ENCODE measurements at regions of chr4 and their contacts with region 1.

Region 1: GRCh38 chr4:110484740-110485139 is 8.8 kb downstream of the ENPEP start:
- DNase-seq: no peak
- ATAC-seq: no peak
- H3K4me3 ChIP-seq: no peak overlapping the region
- H3K27ac ChIP-seq: no peak overlapping the region; the same call in 1 of the 2 replicates
- H3K4me1 ChIP-seq: peaks cover 13% of the 10 kb centered on the region
- H3K27me3 ChIP-seq: no peaks in the 10 kb centered on the region
- CTCF ChIP-seq: no peak
- EP300 ChIP-seq: no peak
- POLR2A ChIP-seq: no peak
- RAD21 ChIP-seq: no peak

Region 2: DNA sequence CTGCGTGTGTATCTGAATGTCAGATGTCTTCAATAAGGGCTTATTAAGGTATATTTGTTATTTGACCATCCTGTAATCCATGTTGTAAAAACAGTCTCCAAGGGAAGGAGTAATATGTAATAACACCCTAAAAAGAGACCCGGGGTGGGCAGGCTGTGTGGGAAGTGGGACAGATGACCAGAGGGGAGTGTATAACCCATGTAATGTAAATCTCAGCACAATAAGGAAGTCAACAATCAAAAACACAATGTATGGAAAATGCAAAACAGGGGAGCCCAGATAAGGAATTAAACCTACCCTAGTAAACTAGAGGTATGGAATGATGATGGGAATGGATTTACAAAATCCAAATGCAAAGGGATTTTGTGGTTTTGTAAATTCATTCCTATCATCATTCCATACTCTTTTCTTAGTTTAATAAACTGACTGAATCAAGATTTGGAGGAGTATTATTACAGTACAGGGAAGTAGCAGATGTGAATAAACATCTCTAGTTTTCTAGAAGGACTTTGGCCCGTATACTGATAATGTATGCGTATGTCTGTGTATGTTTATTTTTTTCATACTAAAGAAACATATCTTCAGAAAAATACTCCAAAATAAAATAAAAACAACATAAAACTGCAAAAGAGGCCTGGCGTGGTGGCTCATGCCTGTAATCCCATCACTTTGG is 24.5 kb before region 1 on chr4:
- CTCF ChIA-PET with region 1: no interaction called
- POLR2A ChIA-PET with region 1: no interaction called
- RAD21 ChIA-PET with region 1: no interaction called
- SMC1A ChIA-PET with region 1: no interaction called
- in situ Hi-C with region 1: no loop called
- intact Hi-C with region 1: no loop called
- DNase-seq: no peak
- ATAC-seq: no peak
- H3K4me3 ChIP-seq: no peak overlapping the region
- H3K27ac ChIP-seq: no peak overlapping the region
- H3K4me1 ChIP-seq: no peaks in the 10 kb centered on the region
- H3K27me3 ChIP-seq: no peaks in the 10 kb centered on the region; a peak in 1 of 4 replicates
- CTCF ChIP-seq: no peak
- EP300 ChIP-seq: no peak
- POLR2A ChIP-seq: no peak
- RAD21 ChIP-seq: no peak

Region 3: DNA sequence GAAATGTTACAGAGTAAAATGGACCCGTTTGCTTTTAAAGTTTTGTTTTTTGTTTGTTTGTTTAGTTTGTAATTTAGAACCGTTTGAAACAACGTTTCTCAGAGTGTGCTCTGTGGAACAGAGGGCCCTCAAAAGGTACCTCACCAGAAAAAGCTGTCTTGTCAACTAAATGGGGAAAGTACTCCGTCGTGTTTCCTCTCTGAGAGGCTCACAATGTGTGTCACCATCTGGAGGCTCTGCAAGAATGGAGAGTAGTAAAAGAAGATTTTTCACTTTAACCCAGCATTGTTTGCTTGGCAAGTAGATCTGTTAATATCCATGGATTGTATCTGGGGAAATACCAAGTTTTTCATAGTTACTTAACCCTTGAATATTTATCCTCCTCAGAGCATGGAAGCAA is 10.3 kb before region 1 on chr4:
- CTCF ChIA-PET with region 1: no interaction called
- POLR2A ChIA-PET with region 1: no interaction called
- RAD21 ChIA-PET with region 1: no interaction called
- SMC1A ChIA-PET with region 1: interaction called, 3 read pairs
- in situ Hi-C with region 1: no loop called
- intact Hi-C with region 1: loop called (anchors 1 kb)
- DNase-seq: no peak
- ATAC-seq: no peak
- H3K4me3 ChIP-seq: no peak overlapping the region
- H3K27ac ChIP-seq: no peak overlapping the region
- H3K4me1 ChIP-seq: no peaks in the 10 kb centered on the region
- H3K27me3 ChIP-seq: no peaks in the 10 kb centered on the region; a peak in 2 of 4 replicates
- CTCF ChIP-seq: no peak
- EP300 ChIP-seq: no peak
- POLR2A ChIP-seq: no peak
- RAD21 ChIP-seq: no peak

Measured in GM12878 (cell line).